ENCODE measurements at regions of chr20 and their contacts with region 1.

Region 1: GRCh38 chr20:62926239-62927104 is at the start of gene DIDO1:
- DNase-seq: peak; percentile 76 to 84 (median 78)
- H3K4me3 ChIP-seq: peak within 1 kb of the TSS; percentile 84 to 91 (median 88)
- H3K4me3 Mint-ChIP-seq: peak within 1 kb of the TSS; percentile 96 to 97
- H3K27ac ChIP-seq: peak within 1 kb of the TSS; percentile 94 to 97
- H3K27ac Mint-ChIP-seq: peak within 1 kb of the TSS; percentile 91 to 96 (median 95)
- H3K4me1 ChIP-seq: peaks cover 47 to 60% of the 10 kb centered on the region in 2 donors
- H3K4me1 Mint-ChIP-seq: peaks cover 58% of the 10 kb centered on the region
- H3K27me3 ChIP-seq: no peaks in the 10 kb centered on the region
- H3K27me3 Mint-ChIP-seq: no peaks in the 10 kb centered on the region
- CTCF ChIP-seq: peak; percentile 84
- polyA plus RNA-seq, gene DIDO1: 8.5 to 23.8 (median 12.9) TPM

Region 2: GRCh38 chr20:63216041-63216848 is 289.8 kb after region 1 on chr20 and contains the start of gene YTHDF1:
- intact Hi-C with region 1: loop called (anchors 2 to 10 kb)
- DNase-seq: peak; percentile 93 to 96 (median 94)
- H3K4me3 ChIP-seq: peak within 1 kb of the TSS; percentile 69 to 89 (median 88)
- H3K4me3 Mint-ChIP-seq: peak within 1 kb of the TSS; percentile 91 to 93
- H3K27ac ChIP-seq: peak within 1 kb of the TSS; percentile 62 to 86
- H3K27ac Mint-ChIP-seq: peak within 1 kb of the TSS; percentile 85 to 95 (median 91)
- H3K4me1 ChIP-seq: peaks cover 15 to 19% of the 10 kb centered on the region in 2 donors
- H3K4me1 Mint-ChIP-seq: peaks cover 24% of the 10 kb centered on the region
- H3K27me3 ChIP-seq: peaks cover 0 to 3% of the 10 kb centered on the region in 2 donors
- H3K27me3 Mint-ChIP-seq: peaks cover 5 to 9% (median 6%) of the 10 kb centered on the region in 3 donors
- CTCF ChIP-seq: no peak
- polyA plus RNA-seq, gene YTHDF1: 18.0 to 33.4 (median 25.9) TPM